Pancreas (tissue), 10 donors: ENCODE measurements at regions of chr10 and their contacts with region 1.

Region 1: GRCh38 chr10:4849555-4850242 is 23.7 kb downstream of the AKR1E2 start:
- DNase-seq: peak; percentile 83 to 98 (median 94)
- ATAC-seq: peak; percentile 79 to 91 (median 86)
- H3K4me3 ChIP-seq: no peak overlapping the region
- H3K27ac ChIP-seq: peak overlapping the region in 2 of 4 donors; percentile 38 to 73
- H3K4me1 ChIP-seq: peaks cover 12 to 33% (median 19%) of the 10 kb centered on the region in 3 donors
- H3K27me3 ChIP-seq: no peaks in the 10 kb centered on the region
- CTCF ChIP-seq: peak; percentile 88 to 97 (median 96)

Region 2: DNA sequence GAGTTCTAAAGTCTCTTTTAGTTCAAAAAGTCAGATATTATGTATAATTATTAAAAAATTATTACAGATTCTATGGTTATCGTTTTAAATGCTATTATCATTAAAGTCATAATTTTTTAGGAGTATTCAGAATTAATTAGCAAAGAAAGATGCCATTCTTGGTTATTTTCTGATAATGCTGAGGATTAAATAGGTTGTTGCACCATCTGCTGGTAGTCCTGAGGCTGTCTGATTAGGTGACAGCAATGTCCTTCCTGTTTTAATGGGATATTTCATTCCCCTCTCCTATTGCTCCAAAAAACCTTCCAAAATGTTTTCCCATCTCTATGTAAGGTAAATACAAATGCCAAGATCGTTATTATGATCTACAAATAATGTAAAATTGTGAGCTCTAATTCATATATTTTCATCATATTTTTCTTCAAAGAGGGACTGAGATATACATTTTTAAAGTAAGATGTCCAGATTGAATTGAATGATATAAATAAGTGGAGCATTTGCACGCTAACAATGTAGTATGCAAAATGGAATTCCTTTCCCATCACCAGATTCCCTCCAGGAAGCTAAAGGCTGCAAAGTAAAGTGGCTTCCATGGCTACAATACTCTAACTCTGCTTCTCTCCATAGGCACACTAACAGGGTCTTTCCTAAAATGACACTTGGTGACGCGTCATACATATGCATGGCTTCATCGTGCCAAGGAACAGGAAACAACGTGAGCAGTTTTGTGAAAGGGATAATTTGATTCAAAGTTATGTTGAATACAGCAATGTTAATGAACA is 82.5 kb before region 1 on chr10:
- intact Hi-C with region 1: no loop called
- DNase-seq: no peak
- ATAC-seq: peak in 3 of 4 donors; percentile 59 to 69 (median 68)
- H3K4me3 ChIP-seq: no peak overlapping the region
- H3K27ac ChIP-seq: no peak overlapping the region
- H3K4me1 ChIP-seq: peaks cover 0 to 5% (median 4%) of the 10 kb centered on the region in 3 donors
- H3K27me3 ChIP-seq: no peaks in the 10 kb centered on the region
- CTCF ChIP-seq: peak; percentile 12 to 37 (median 24)

Region 3: GRCh38 chr10:4977025-4977424 is 127.3 kb after region 1 on chr10:
- intact Hi-C with region 1: no loop called
- DNase-seq: no peak
- ATAC-seq: no peak
- H3K4me3 ChIP-seq: no peak overlapping the region
- H3K27ac ChIP-seq: no peak overlapping the region
- H3K4me1 ChIP-seq: peaks cover 5 to 12% (median 10%) of the 10 kb centered on the region in 3 donors
- H3K27me3 ChIP-seq: no peaks in the 10 kb centered on the region
- CTCF ChIP-seq: no peak

Region 4: GRCh38 chr10:5094265-5095205 is 244.8 kb after region 1 on chr10 and contains the start of gene AKR1C3:
- intact Hi-C with region 1: loop called in 1 of 3 experiments (anchors 10 kb)
- DNase-seq: peak in 1 of 6 donors; percentile 25
- ATAC-seq: peak; percentile 85 to 88 (median 87)
- H3K4me3 ChIP-seq: peak within 1 kb of the TSS; percentile 1 to 42 (median 26)
- H3K27ac ChIP-seq: peak within 1 kb of the TSS; percentile 16 to 82 (median 47)
- H3K4me1 ChIP-seq: peaks cover 4 to 19% (median 15%) of the 10 kb centered on the region in 3 donors
- H3K27me3 ChIP-seq: no peaks in the 10 kb centered on the region
- CTCF ChIP-seq: peak; percentile 38 to 60 (median 50)
- total RNA-seq, gene AKR1C3: 14.5 to 36.1 (median 22.2) TPM

Region 5: DNA sequence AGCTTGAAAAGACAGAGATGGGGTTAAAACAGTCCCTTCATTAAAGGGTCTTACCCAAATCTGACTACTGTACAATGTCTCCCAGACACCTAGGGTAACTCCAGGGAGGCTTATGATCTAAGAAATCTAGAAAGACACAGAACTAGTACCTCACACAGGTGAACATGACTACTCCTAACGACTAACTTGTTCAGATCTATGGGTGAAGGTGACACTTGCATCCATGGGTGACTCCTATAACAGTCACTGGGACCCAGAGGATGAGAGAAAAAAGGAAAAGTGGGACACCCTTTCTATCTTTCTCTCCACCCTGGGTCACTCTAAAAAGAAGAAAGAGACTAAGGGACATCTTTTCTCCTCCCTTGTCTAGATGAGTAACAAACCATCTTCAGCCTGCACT is 316.0 kb after region 1 on chr10:
- intact Hi-C with region 1: no loop called
- DNase-seq: no peak
- ATAC-seq: no peak
- H3K4me3 ChIP-seq: no peak overlapping the region
- H3K27ac ChIP-seq: no peak overlapping the region
- H3K4me1 ChIP-seq: no peaks in the 10 kb centered on the region
- H3K27me3 ChIP-seq: no peaks in the 10 kb centered on the region
- CTCF ChIP-seq: no peak

Region 6: GRCh38 chr10:5272065-5272803 is 422.5 kb after region 1 on chr10:
- intact Hi-C with region 1: no loop called
- DNase-seq: no peak
- ATAC-seq: no peak
- H3K4me3 ChIP-seq: no peak overlapping the region
- H3K27ac ChIP-seq: no peak overlapping the region
- H3K4me1 ChIP-seq: no peaks in the 10 kb centered on the region
- H3K27me3 ChIP-seq: no peaks in the 10 kb centered on the region
- CTCF ChIP-seq: no peak

Region 7: DNA sequence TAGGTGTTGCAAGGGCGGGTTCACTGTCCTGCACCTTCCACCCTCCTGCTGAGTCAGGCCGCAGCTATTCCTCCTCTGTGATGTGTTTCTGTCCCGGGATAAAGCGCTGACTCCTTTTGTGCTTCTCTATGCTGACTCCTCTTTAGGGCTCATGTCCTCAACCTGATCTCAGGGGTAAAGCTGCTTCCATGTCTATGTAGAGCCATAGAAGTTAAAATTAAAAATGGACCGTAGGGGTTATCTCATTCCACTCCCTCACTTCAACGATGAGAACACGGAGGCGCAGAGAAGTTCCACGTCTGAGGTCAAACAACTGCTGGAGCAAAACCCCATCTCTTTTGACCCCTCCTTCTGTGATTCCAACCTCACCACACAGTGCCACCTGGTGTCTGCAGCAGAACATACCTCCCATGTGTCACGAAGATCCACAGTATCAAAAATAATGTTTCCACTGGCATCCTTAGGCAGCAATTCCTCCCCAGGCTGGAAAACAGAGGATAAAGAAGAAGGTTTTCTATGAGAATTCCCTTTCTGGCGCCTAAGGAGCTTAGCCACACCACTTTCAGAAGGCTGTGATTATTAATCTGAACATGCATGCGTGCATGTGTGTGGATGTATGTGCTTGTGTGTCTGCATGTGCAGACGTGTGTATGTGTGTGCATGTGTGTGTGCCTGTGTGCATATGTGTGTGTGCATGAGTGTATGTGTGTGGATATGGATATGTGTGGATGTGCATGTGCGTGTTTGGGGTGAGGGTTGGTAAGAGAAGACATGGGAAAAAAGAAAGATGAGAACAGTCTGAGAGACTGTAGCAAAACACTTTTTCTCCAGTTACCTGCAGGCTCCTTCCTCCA is 433.8 kb after region 1 on chr10:
- intact Hi-C with region 1: loop called in 1 of 3 experiments (anchors 10 kb)
- DNase-seq: peak; percentile 44 to 77 (median 60)
- ATAC-seq: peak; percentile 96 to 99 (median 98)
- H3K4me3 ChIP-seq: no peak overlapping the region
- H3K27ac ChIP-seq: no peak overlapping the region
- H3K4me1 ChIP-seq: no peaks in the 10 kb centered on the region
- H3K27me3 ChIP-seq: peaks cover 0 to 5% (median 0%) of the 10 kb centered on the region in 4 donors
- CTCF ChIP-seq: peak; percentile 46 to 62 (median 55)

Region 8: GRCh38 chr10:5297466-5297865 is 447.8 kb after region 1 on chr10:
- intact Hi-C with region 1: loop called in 1 of 3 experiments (anchors 5 kb)
- DNase-seq: no peak
- ATAC-seq: peak in 2 of 4 donors; percentile 12 to 42
- H3K4me3 ChIP-seq: no peak overlapping the region
- H3K27ac ChIP-seq: no peak overlapping the region
- H3K4me1 ChIP-seq: no peaks in the 10 kb centered on the region
- H3K27me3 ChIP-seq: no peaks in the 10 kb centered on the region
- CTCF ChIP-seq: no peak